ENCODE measurements at regions of chr16 and their contacts with region 1.

Region 1: DNA sequence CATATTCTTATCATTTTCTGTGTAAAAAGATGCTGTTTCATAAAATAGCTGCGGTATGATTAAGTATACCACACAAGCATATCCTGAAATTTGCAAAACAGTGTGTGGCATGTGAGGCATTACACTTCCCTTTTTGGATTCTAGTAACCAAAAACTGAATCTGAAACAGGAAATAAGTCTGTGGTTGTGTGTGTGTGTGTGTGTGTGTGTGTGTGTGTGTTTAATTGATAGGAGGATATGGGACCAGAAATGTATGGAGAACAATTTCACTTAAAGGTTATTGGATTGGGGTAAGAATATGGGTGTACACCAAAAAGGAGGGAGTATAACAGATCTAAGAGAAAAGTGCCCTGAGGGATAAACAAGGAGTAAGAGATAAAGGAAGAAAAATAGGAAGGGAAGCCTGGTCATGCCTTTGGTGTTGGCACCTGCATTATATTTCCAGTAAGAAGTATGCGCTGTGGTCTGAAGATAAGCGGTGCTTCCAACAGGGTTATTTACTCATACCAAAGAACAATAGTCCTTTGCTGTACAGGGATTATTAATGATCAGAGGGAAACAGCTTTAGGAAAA is 4.0 kb downstream of the LYRM1 start:
- DNase-seq: no peak

Region 2: DNA sequence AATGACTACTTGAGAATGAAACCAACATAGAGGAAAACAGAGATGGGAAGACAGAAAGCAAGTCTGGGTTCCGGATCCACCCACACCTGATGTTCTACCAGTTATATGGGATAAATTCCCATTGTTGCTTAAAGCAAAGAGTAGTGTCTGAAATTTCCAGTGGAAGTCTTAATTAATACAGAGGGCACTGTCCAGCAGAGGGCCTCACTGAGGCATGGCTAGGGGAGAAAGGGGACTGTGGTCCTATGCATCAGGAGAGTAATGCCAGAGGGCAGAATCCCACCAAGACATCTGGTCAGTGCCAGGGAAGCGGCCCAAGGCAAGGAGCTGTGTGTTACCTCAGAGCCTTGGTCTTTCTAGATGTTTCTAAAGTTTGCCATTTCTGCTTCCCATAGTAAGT is 544.6 kb before region 1 on chr16:
- intact Hi-C with region 1: no loop called
- DNase-seq: no peak

Region 3: DNA sequence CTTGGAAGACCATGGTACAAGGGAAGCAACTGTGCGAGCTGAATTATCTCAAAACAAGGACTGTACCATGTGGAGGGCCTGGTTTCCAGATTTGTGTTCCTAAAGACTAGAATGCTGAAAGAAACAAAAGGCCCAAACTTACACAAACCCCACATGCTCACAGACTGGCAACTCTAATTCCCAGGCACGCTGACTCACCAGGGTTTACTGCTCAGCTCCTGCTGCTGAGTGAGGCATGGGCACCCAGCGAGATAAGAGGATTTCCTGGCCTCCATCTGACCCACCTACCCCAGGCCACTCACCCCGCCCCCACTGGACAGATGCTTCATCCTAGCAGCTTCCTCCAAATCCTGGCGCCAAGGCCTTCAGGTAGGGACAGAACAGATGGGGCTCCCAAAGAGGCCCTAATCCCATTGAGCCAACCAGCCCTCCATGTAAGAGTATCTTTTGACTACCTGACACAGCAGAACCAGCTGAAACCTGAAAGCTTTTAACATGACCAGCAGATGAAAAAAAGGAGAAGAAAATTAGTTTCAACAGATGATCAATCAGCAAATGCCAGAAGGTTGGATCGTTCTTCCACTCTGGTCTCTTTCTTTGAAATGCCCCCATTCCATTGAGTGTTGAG is 38.3 kb before region 1 on chr16:
- intact Hi-C with region 1: loop called in 1 of 2 experiments (anchors 5 kb)
- DNase-seq: peak; percentile 86

Region 4: DNA sequence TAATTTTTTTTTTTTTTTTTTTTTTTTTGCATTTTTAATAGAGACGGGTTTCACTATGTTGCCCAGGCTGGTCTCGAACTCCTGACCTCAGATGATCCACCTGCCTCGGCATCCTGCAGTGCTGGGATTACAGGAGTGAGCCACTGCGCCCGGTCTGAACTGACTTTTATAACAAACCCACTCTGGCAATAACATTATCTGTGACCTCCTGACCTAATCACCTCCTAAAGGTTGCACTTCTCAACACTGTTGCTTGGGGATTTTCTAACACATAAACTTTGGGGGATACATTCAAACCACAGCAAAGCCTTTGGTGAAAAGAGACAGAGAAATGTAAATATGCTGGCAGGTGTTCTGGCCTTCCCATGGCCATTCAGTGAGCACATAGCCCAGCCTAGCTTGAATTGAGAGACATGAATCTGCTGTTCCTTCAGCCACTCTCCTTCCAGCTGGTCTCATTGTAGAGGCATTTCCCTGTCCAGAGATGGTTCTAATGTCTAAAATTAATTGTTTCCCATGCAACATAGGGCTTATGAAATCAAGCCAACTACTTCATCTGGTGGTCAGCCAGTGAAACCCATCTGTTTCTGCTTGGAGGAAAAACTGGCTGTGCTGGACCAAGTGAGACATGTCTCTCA is 24.3 kb after region 1 on chr16:
- intact Hi-C with region 1: no loop called
- DNase-seq: no peak

Measured in posterior vena cava (tissue), 2 donors.